Natural killer cell (primary cell): ENCODE measurements at regions of chr9 and their contacts with region 1.

Region 1: GRCh38 chr9:37079370-37080164 is 40.8 kb upstream of the ZCCHC7 start:
- DNase-seq: peak; percentile 85 to 97
- ATAC-seq: peak; percentile 96 to 99 (median 96)
- H3K4me3 ChIP-seq: peak overlapping the region; percentile 78
- H3K4me3 Mint-ChIP-seq: peak overlapping the region; percentile 96
- H3K27ac ChIP-seq: peak overlapping the region; percentile 94
- H3K27ac Mint-ChIP-seq: peak overlapping the region; percentile 93 to 99
- H3K4me1 ChIP-seq: peaks cover 17% of the 10 kb centered on the region
- H3K4me1 Mint-ChIP-seq: peaks cover 42 to 45% of the 10 kb centered on the region in 2 donors
- H3K27me3 ChIP-seq: no peaks in the 10 kb centered on the region
- H3K27me3 Mint-ChIP-seq: peaks cover 6 to 8% of the 10 kb centered on the region in 2 donors
- CTCF ChIP-seq: no peak

Region 2: GRCh38 chr9:37119907-37120842 is 40.6 kb after region 1 on chr9 and contains the start of gene ZCCHC7:
- intact Hi-C with region 1: loop called (anchors 1 kb)
- DNase-seq: peak; percentile 97 to 98
- ATAC-seq: peak; percentile 92 to 98 (median 93)
- H3K4me3 ChIP-seq: peak within 1 kb of the TSS; percentile 93
- H3K4me3 Mint-ChIP-seq: peak within 1 kb of the TSS; percentile 94
- H3K27ac ChIP-seq: peak within 1 kb of the TSS; percentile 91
- H3K27ac Mint-ChIP-seq: peak within 1 kb of the TSS; percentile 96
- H3K4me1 ChIP-seq: peaks cover 9% of the 10 kb centered on the region
- H3K4me1 Mint-ChIP-seq: peaks cover 27 to 40% of the 10 kb centered on the region in 2 donors
- H3K27me3 ChIP-seq: no peaks in the 10 kb centered on the region
- H3K27me3 Mint-ChIP-seq: no peaks in the 10 kb centered on the region
- CTCF ChIP-seq: no peak
- total RNA-seq, gene ZCCHC7: 42.4 to 43.2 (median 42.8) TPM

Region 3: DNA sequence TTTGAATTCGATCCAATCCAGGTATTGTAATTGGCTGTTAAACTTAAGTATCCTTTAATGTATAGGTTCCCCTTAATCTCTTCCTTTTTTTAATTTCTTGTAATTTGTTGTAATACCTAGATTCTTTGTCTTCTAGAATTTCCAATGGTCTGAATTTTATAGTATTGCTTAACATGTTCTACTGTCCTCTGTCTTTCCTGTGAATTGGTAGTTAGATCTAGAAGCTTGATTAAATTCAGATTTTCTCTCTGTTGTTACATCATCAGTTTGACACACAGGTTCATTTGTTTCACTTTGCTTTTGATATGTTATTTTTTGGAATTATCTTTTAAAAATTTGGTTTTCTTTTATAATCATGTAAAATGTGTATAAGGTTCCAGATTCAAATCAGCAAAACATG is 54.6 kb after region 1 on chr9:
- intact Hi-C with region 1: no loop called
- DNase-seq: no peak
- ATAC-seq: no peak
- H3K4me3 ChIP-seq: no peak overlapping the region
- H3K4me3 Mint-ChIP-seq: no peak overlapping the region
- H3K27ac ChIP-seq: no peak overlapping the region
- H3K27ac Mint-ChIP-seq: peak overlapping the region in 1 of 2 donors; percentile 47
- H3K4me1 ChIP-seq: no peaks in the 10 kb centered on the region
- H3K4me1 Mint-ChIP-seq: peaks cover 16 to 23% of the 10 kb centered on the region in 2 donors
- H3K27me3 ChIP-seq: no peaks in the 10 kb centered on the region
- H3K27me3 Mint-ChIP-seq: no peaks in the 10 kb centered on the region
- CTCF ChIP-seq: no peak